AG04449 (cell line): ENCODE measurements at regions of chr1 and their contacts with region 1.

Region 1: GRCh38 chr1:241485554-241485992 is 34.0 kb downstream of the FH start:
- DNase-seq: no peak
- H3K4me3 ChIP-seq: no peak overlapping the region
- CTCF ChIP-seq: peak; percentile 25

Region 2: GRCh38 chr1:241401156-241401555 is 84.4 kb before region 1 on chr1:
- CTCF ChIA-PET with region 1: no interaction called
- POLR2A ChIA-PET with region 1: no interaction called
- DNase-seq: no peak
- H3K4me3 ChIP-seq: no peak overlapping the region
- CTCF ChIP-seq: no peak

Region 3: GRCh38 chr1:241464985-241465384 is 20.6 kb before region 1 on chr1:
- CTCF ChIA-PET with region 1: no interaction called
- POLR2A ChIA-PET with region 1: no interaction called
- DNase-seq: no peak
- H3K4me3 ChIP-seq: no peak overlapping the region
- CTCF ChIP-seq: no peak

Region 4: DNA sequence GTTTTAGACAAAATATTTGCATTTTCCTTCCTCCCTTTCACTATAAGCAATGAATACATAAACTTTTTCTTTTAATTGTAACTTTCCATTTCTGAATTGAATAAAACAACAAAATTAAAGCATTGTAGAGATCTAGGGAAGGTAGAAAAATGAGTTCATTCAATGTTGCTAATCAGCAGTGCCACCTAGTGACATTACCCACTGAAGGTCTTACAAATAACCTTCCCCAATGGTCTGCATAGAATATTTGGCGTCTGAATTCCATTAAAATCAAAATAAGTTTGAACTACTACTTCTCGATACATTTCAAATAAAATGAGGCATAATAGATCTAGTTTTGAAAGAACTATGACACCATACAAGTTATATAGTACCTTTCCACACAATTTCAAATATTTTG is 14.3 kb after region 1 on chr1:
- CTCF ChIA-PET with region 1: interaction called, 14 read pairs
- POLR2A ChIA-PET with region 1: no interaction called
- DNase-seq: no peak
- H3K4me3 ChIP-seq: no peak overlapping the region
- CTCF ChIP-seq: peak; percentile 58

Region 5: GRCh38 chr1:241560146-241560848 is 74.7 kb after region 1 on chr1:
- CTCF ChIA-PET with region 1: no interaction called
- POLR2A ChIA-PET with region 1: no interaction called
- DNase-seq: no peak
- H3K4me3 ChIP-seq: no peak overlapping the region
- CTCF ChIP-seq: no peak